ENCODE measurements at regions of chr5 and their contacts with region 1.

Region 1: DNA sequence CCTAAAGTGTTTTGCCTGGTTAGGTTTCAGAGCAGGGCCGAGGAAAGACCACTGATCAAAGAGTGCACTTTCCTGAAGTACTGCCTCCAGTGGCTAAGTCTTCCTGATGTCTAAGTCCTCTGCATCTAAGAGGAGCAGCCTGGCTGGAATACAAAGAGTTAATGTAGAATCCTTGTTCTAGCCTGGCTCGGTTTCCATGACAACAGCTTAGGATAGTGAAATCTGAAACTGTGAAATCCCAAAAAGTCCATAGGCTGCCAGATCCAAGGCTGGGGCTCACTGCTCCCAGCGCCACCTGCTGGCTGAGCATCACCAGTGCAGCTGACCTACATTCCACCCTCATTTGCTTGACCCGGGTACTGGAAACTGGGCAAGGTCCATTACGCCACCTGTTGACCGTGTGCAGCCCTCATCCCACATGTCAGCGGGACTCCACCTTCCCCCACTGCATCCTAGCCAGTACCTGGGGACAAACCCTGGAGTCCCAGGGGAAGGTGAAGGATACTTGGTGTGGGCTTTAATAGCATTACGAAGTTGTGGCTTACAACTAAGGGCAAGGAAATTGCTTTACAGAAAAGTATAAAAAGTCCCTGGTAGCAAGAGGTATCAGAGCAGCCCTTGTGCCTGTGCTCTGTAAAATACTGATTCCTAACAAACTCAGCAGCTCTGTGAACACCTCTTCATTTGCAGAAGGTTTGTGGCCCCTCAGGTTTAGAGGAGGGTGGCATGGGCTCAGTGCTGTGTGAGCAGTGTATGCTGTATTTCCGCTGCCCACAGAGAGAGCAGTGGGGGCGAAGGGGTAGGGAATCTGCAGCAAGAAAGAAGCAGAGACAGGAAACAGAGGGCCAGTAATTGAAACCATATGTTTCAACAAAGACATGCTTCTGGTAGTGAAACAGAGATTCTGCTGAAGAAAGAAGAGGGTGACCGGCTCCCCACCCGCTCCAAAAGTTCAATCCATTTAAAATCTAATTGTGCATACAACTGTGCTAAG is 36.0 kb downstream of the PCDHGC5 start:
- DNase-seq: peak; percentile 82 to 88
- H3K4me3 ChIP-seq: no peak overlapping the region
- H3K4me3 Mint-ChIP-seq: peak overlapping the region; percentile 5
- H3K27ac Mint-ChIP-seq: peak overlapping the region; percentile 40
- H3K4me1 ChIP-seq: peaks cover 29% of the 10 kb centered on the region
- H3K4me1 Mint-ChIP-seq: peaks cover 21% of the 10 kb centered on the region
- H3K27me3 ChIP-seq: no peaks in the 10 kb centered on the region
- H3K27me3 Mint-ChIP-seq: no peaks in the 10 kb centered on the region
- CTCF ChIP-seq: peak; percentile 92 to 93

Region 2: GRCh38 chr5:141223112-141223783 is 301.7 kb before region 1 on chr5 and contains the start of gene PCDHB14:
- CTCF ChIA-PET with region 1: no interaction called
- POLR2A ChIA-PET with region 1: no interaction called
- intact Hi-C with region 1: loop called (anchors 1 kb)
- DNase-seq: peak in 1 of 2 experiments; percentile 28
- H3K4me3 ChIP-seq: peak within 1 kb of the TSS; percentile 32
- H3K4me3 Mint-ChIP-seq: peak within 1 kb of the TSS; percentile 58
- H3K27ac Mint-ChIP-seq: no peak within 1 kb of the TSS
- H3K4me1 ChIP-seq: no peaks in the 10 kb centered on the region
- H3K4me1 Mint-ChIP-seq: no peaks in the 10 kb centered on the region
- H3K27me3 ChIP-seq: no peaks in the 10 kb centered on the region
- H3K27me3 Mint-ChIP-seq: no peaks in the 10 kb centered on the region
- CTCF ChIP-seq: peak; percentile 21 to 29
- total RNA-seq, gene PCDHB14: 0.41 and 0.44 TPM in 2 replicates

Region 3: GRCh38 chr5:141320225-141321169 is 204.4 kb before region 1 on chr5 and contains the start of gene TAF7:
- CTCF ChIA-PET with region 1: interaction called, 3 read pairs
- POLR2A ChIA-PET with region 1: interaction called, 3 read pairs
- intact Hi-C with region 1: loop called (anchors 1 kb)
- DNase-seq: peak; percentile 94 to 95
- H3K4me3 ChIP-seq: peak within 1 kb of the TSS; percentile 95
- H3K4me3 Mint-ChIP-seq: peak within 1 kb of the TSS; percentile 96
- H3K27ac Mint-ChIP-seq: peak within 1 kb of the TSS; percentile 100
- H3K4me1 ChIP-seq: peaks cover 5% of the 10 kb centered on the region; the same call in 1 of the 2 replicates
- H3K4me1 Mint-ChIP-seq: peaks cover 6% of the 10 kb centered on the region
- H3K27me3 ChIP-seq: no peaks in the 10 kb centered on the region
- H3K27me3 Mint-ChIP-seq: no peaks in the 10 kb centered on the region
- CTCF ChIP-seq: peak; percentile 87 to 93
- total RNA-seq, gene TAF7: 77.2 and 78.7 TPM in 2 replicates

Region 4: DNA sequence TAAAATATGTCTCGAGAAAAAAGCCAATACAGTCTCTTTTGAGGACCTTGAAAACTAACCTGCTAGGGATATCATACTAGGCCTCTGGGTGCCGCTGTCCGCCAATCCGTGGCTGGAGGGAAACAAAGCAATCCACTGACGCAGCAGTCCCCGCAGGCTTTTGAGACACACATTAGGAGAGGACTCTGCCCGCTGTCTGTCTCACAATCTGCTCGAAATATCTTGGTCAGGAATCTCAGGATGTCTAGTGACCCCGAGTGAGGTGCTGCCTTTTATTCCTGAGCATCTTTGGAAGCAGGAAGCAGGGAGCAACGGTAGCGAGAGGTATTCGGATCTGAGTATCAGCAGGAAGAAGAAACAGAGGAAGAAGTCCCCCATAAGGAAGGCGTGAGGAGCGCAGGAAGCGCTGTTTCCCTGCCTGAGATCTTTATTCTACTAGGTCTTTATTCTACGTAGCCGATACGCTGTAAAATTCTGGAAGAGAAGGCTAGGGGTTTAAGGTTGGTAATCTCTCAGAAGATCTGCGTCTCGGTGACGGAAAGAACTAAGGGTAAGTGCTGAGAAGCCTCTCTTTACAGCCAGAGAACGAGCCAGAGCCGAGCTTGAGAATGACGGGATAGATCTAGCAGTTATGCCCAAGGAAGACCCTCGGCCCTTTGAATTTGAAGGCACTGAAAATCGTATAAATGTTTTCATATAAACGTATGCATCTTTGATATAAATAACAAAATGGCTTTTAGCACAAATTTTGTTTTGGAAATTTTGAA is 198.6 kb before region 1 on chr5:
- CTCF ChIA-PET with region 1: no interaction called
- POLR2A ChIA-PET with region 1: no interaction called
- intact Hi-C with region 1: loop called (anchors 1 kb)
- DNase-seq: peak; percentile 82 to 85
- H3K4me3 ChIP-seq: peak overlapping the region; percentile 39
- H3K4me3 Mint-ChIP-seq: peak overlapping the region; percentile 93
- H3K27ac Mint-ChIP-seq: peak overlapping the region; percentile 88
- H3K4me1 ChIP-seq: no peaks in the 10 kb centered on the region
- H3K4me1 Mint-ChIP-seq: no peaks in the 10 kb centered on the region
- H3K27me3 ChIP-seq: no peaks in the 10 kb centered on the region
- H3K27me3 Mint-ChIP-seq: no peaks in the 10 kb centered on the region
- CTCF ChIP-seq: peak; percentile 80 to 85

Region 5: DNA sequence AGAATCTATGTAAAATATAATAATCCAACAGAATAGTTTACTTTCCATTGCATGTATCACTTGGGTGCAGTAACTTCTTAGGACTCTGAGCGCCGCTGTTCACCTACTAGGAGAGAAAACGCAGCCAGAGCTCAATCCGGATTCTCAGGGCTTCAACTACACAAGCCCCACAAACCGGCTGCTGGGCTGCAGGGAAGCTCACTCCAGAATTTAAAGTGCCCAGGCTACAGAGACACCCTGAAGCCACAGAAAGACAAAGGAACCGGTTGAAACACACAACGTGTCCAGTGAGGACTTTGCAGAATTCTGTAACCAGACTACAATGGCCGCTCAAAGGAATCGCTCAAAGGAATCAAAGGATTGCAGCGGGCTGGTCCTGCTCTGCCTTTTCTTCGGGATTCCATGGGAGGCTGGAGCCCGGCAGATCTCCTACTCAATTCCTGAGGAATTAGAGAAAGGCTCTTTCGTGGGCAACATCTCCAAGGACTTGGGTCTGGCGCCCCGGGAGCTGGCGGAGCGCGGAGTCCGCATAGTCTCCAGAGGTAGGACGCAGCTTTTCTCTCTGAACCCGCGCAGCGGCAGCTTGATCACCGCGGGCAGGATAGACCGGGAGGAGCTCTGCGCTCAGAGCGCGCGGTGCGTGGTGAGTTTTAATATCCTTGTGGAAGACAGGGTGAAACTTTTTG is 111.9 kb before region 1 on chr5 and contains the start of gene PCDHGA10:
- CTCF ChIA-PET with region 1: interaction called, 4 read pairs
- POLR2A ChIA-PET with region 1: no interaction called
- intact Hi-C with region 1: loop called (anchors 1 kb)
- DNase-seq: peak in 1 of 2 experiments; percentile 50
- H3K4me3 ChIP-seq: peak within 1 kb of the TSS; percentile 49
- H3K4me3 Mint-ChIP-seq: peak within 1 kb of the TSS; percentile 86
- H3K27ac Mint-ChIP-seq: no peak within 1 kb of the TSS
- H3K4me1 ChIP-seq: no peaks in the 10 kb centered on the region
- H3K4me1 Mint-ChIP-seq: no peaks in the 10 kb centered on the region
- H3K27me3 ChIP-seq: no peaks in the 10 kb centered on the region
- H3K27me3 Mint-ChIP-seq: no peaks in the 10 kb centered on the region
- CTCF ChIP-seq: peak; percentile 50 to 55
- total RNA-seq, gene PCDHGA10: 2.9 and 3.6 TPM in 2 replicates

Region 6: GRCh38 chr5:141543053-141543452 is 18.2 kb after region 1 on chr5:
- CTCF ChIA-PET with region 1: no interaction called
- POLR2A ChIA-PET with region 1: no interaction called
- intact Hi-C with region 1: no loop called
- DNase-seq: no peak
- H3K4me3 ChIP-seq: no peak overlapping the region
- H3K4me3 Mint-ChIP-seq: no peak overlapping the region
- H3K27ac Mint-ChIP-seq: no peak overlapping the region
- H3K4me1 ChIP-seq: no peaks in the 10 kb centered on the region
- H3K4me1 Mint-ChIP-seq: no peaks in the 10 kb centered on the region
- H3K27me3 ChIP-seq: no peaks in the 10 kb centered on the region
- H3K27me3 Mint-ChIP-seq: no peaks in the 10 kb centered on the region
- CTCF ChIP-seq: no peak

Region 7: DNA sequence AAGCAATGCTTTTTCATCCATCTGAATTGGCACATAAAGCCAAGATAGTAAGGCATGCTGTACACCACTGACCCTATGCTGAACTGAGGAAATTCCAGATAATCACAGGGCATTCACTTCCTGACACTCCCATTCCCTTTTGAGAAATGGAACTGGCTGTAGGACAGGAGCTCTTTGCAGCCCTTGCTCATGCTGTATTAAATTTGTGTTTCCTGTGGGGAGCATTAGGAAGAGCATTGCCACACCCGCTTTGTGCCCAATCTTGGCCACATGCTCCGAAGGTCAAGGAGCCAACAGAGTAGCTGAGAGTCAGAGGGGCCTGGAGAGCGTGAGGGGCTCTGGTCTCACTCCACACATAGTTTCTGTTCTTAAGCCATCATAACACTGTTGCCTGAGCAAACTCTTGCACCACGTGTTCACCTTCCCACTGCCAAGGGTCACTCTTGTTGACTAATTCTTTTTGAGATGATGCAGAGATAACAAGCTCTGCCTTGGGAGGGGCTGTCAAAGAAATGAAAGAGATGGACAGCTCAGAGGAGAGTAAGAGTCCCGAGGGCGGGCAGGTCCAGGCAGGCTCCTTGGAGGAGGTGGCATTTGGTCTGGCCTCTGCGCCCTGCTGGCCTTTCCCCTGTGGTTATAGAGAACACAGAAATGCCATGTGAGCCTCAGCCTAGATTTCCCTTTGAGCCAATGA is 188.9 kb after region 1 on chr5:
- CTCF ChIA-PET with region 1: no interaction called
- POLR2A ChIA-PET with region 1: no interaction called
- intact Hi-C with region 1: no loop called
- DNase-seq: peak; percentile 74 to 90
- H3K4me3 ChIP-seq: no peak overlapping the region
- H3K4me3 Mint-ChIP-seq: peak overlapping the region; percentile 46
- H3K27ac Mint-ChIP-seq: peak overlapping the region; percentile 38
- H3K4me1 ChIP-seq: peaks cover 40% of the 10 kb centered on the region
- H3K4me1 Mint-ChIP-seq: peaks cover 28% of the 10 kb centered on the region
- H3K27me3 ChIP-seq: no peaks in the 10 kb centered on the region
- H3K27me3 Mint-ChIP-seq: no peaks in the 10 kb centered on the region
- CTCF ChIP-seq: no peak

Region 8: GRCh38 chr5:141903261-141903660 is 378.4 kb after region 1 on chr5:
- CTCF ChIA-PET with region 1: no interaction called
- POLR2A ChIA-PET with region 1: no interaction called
- intact Hi-C with region 1: no loop called
- DNase-seq: no peak
- H3K4me3 ChIP-seq: no peak overlapping the region
- H3K4me3 Mint-ChIP-seq: no peak overlapping the region
- H3K27ac Mint-ChIP-seq: no peak overlapping the region
- H3K4me1 ChIP-seq: no peaks in the 10 kb centered on the region
- H3K4me1 Mint-ChIP-seq: no peaks in the 10 kb centered on the region
- H3K27me3 ChIP-seq: peaks cover 2% of the 10 kb centered on the region
- H3K27me3 Mint-ChIP-seq: no peaks in the 10 kb centered on the region
- CTCF ChIP-seq: no peak